ENCODE measurements at regions of chr1 and their contacts with region 1.

Region 1: DNA sequence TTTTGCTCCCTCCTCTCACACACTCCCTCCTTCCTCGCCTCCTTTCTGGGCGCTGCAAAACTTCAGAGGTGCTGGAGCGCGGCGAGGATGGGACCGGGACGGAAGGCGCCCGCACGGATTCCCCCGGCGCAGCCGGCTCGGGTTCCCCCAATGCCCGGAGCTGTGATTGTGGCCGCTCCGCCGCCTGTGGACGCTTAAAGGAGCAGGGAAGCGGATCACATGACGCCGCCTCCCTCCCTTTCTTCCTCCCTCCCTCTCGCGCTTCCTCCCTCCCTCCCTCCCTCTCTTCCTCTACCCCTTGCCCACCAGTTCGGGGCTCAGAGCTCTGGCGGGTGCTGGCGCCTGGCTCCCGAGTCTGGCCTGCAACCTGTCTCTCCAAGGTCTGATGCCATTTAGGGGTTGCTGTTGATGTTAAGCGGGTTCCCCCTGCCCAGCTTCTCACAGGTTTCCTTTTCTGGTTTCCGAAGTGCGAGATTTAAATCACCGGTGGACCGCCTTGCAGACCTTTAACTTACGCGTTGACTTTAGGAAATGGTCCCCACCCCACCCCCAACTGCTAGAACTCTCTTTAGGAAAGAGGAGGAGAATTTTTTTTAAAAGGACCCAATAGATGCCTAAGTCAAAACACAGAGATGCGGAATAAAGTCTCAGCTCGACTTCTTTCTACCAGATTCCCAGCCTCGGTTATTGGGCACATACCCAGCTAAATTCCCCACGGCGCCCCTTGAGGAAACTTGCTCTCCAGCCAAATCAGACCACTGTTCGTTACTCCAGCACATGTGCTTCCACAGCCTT is at the start of gene WLS:
- DNase-seq: peak; percentile 68 to 89 (median 80)
- ATAC-seq: peak; percentile 81 to 87 (median 84)
- H3K4me3 ChIP-seq: peak within 1 kb of the TSS; percentile 35 to 74 (median 59)
- H3K27ac ChIP-seq: peak within 1 kb of the TSS; percentile 78 to 90 (median 80)
- H3K4me1 ChIP-seq: peaks cover 5 to 22% (median 14%) of the 10 kb centered on the region in 3 donors
- H3K27me3 ChIP-seq: no peaks in the 10 kb centered on the region
- CTCF ChIP-seq: no peak
- total RNA-seq, gene WLS: 58.3 to 121 (median 77.8) TPM

Region 2: DNA sequence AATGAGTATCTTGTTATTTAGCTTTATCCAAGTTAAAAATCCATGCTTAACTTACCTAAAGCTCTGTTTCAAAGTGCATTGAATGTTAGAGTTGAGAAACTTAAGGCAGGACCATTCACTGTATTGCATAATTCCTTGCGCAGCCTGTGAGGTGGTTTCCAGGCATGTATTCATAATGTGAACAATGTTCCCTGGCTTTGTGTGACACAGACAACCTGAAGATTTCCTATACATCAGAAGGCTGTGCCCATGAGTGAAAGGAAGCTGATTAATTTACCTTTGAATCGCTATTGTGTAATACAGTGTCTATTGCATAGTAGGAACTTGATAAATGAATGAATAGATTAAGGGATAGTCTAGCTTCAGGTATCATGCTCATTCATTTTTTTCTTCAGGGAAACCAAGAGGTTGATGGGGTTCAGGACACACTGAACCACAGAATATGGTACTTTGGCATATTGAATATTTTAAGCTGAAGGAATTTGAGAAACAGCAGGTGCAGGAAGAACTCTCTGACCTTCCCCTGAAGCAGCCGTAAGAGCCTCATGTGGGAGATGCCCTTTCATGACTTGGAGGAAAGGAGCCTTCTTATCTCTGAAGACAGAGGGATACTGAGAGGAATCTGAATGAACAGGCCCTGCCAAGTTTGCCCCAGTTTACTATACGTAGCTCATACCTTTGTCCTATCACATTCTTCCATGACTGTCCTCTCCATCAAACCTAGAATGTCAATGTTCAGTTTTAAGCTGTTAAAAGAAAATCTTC is 310.6 kb before region 1 on chr1:
- intact Hi-C with region 1: no loop called
- DNase-seq: no peak
- ATAC-seq: no peak
- H3K4me3 ChIP-seq: no peak overlapping the region
- H3K27ac ChIP-seq: no peak overlapping the region
- H3K4me1 ChIP-seq: no peaks in the 10 kb centered on the region
- H3K27me3 ChIP-seq: no peaks in the 10 kb centered on the region
- CTCF ChIP-seq: no peak

Region 3: DNA sequence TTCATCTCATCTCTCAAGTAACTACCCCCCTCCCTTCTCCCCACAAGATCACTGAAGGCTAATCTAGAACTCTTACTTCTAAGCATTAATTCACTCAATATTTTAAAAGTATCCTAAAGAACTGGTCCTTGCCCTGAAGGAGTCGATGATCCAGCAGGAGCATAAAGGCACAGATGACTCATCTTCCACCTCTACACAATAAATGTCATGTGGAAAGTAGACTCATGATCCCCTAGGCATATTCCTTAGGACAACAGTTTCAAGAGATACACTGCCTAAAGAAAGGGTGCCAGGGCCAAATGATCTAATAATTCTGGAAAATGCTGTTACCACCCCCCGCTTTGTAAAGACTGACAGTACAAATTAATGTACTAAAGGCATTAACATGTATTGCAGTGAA is 96.4 kb before region 1 on chr1:
- intact Hi-C with region 1: loop called in 1 of 3 experiments (anchors 10 kb)
- DNase-seq: no peak
- ATAC-seq: no peak
- H3K4me3 ChIP-seq: no peak overlapping the region
- H3K27ac ChIP-seq: no peak overlapping the region
- H3K4me1 ChIP-seq: no peaks in the 10 kb centered on the region
- H3K27me3 ChIP-seq: no peaks in the 10 kb centered on the region
- CTCF ChIP-seq: no peak

Region 4: DNA sequence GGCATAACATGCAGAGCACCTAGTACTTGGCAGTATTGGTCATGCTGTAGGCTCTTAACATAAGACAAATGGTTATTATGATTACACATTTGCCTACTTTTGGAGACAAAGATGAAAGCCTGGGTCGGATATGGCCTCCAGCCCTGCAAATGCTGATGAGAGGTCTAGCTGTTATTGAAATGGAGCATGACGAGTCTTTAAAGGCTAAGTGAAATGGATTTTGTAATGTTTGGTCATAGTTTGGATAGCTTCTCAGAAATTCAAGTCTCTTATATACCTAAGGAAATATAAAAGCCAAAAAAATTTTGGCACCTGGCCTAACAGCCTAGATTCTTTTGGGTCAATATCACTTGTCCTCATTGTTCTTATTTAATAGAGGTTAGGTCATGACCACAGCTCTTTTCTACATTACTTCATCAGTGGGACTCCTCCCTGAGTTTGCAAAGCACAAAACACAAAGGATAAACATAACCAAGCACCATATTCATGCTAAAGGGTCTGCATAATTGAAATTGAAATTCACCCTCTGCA is 69.0 kb after region 1 on chr1:
- intact Hi-C with region 1: loop called in 1 of 3 experiments (anchors 10 kb)
- DNase-seq: no peak
- ATAC-seq: no peak
- H3K4me3 ChIP-seq: no peak overlapping the region
- H3K27ac ChIP-seq: no peak overlapping the region
- H3K4me1 ChIP-seq: no peaks in the 10 kb centered on the region
- H3K27me3 ChIP-seq: no peaks in the 10 kb centered on the region
- CTCF ChIP-seq: no peak

Measured in pancreas (tissue), 10 donors.